Left ventricle myocardium superior (tissue), 1 donor: ENCODE measurements at regions of chr5 and their contacts with region 1.

Region 1: GRCh38 chr5:43389679-43390329 is 22.4 kb downstream of the CCL28 start:
- DNase-seq: no peak
- ATAC-seq: peak; percentile 90

Region 2: DNA sequence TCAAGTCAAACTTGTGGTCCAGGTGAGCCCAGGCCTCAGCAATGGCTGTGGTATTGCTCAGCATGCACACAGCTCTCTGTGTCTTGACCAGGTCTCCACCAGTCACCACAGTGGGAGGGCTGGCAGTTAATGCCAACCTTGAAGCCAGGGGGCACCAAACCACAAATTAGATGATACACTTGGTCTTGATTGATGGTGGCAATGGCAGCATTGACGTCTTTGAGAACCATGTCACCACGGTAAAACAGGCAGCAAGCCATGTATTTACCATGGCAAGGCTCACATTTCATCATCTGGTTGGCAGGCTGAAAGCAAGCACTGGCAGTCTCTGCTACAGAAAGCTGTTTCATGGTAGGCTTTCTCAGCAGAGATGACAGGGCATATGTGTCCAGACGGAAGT is 157.8 kb before region 1 on chr5:
- intact Hi-C with region 1: loop called (anchors 10 kb)
- DNase-seq: no peak
- ATAC-seq: no peak

Region 3: DNA sequence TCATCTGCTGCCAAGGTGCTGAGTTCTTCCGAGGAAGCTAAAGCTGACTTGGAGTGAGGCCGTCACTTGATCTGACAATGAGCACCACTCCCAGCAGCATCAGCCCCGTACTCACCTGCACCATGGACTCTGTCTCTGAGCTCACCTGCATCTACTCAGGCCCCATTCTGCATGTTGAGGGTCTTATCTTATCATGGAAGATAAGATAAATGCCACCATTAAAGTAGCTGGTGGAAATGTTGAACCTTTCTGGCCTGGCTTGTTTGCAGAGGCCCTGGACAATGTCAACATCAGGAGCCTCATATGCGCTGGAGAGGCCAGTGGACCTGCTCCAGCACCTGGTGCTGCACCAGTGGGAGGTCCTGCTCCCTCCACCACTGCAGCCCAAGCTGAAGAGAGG is 41.6 kb before region 1 on chr5:
- intact Hi-C with region 1: no loop called
- DNase-seq: no peak
- ATAC-seq: no peak